ENCODE measurements at regions of chr6 and their contacts with region 1.

Region 1: GRCh38 chr6:143698759-143699429 is 21.1 kb downstream of the PHACTR2 start:
- DNase-seq: peak in 1 of 2 experiments; percentile 68
- H3K4me3 ChIP-seq: no peak overlapping the region
- H3K27ac ChIP-seq: no peak overlapping the region; the same call in 1 of the 2 replicates
- H3K4me1 ChIP-seq: peaks cover 0 to 11% (median 3%) of the 10 kb centered on the region in 4 experiments; a peak in 3 of 7 replicates
- H3K27me3 ChIP-seq: no peaks in the 10 kb centered on the region
- CTCF ChIP-seq: peak; percentile 47 to 75 (median 48)
- EP300 ChIP-seq: no peak
- POLR2A ChIP-seq: no peak
- RAD21 ChIP-seq: peak; percentile 47 to 68

Region 2: GRCh38 chr6:143726015-143726647 is 27.2 kb after region 1 on chr6:
- CTCF ChIA-PET with region 1: interaction called, 13 read pairs
- POLR2A ChIA-PET with region 1: no interaction called
- DNase-seq: no peak
- H3K4me3 ChIP-seq: no peak overlapping the region
- H3K27ac ChIP-seq: no peak overlapping the region
- H3K4me1 ChIP-seq: no peaks in the 10 kb centered on the region
- H3K27me3 ChIP-seq: no peaks in the 10 kb centered on the region
- CTCF ChIP-seq: no peak
- EP300 ChIP-seq: no peak
- POLR2A ChIP-seq: no peak
- RAD21 ChIP-seq: no peak

Region 3: DNA sequence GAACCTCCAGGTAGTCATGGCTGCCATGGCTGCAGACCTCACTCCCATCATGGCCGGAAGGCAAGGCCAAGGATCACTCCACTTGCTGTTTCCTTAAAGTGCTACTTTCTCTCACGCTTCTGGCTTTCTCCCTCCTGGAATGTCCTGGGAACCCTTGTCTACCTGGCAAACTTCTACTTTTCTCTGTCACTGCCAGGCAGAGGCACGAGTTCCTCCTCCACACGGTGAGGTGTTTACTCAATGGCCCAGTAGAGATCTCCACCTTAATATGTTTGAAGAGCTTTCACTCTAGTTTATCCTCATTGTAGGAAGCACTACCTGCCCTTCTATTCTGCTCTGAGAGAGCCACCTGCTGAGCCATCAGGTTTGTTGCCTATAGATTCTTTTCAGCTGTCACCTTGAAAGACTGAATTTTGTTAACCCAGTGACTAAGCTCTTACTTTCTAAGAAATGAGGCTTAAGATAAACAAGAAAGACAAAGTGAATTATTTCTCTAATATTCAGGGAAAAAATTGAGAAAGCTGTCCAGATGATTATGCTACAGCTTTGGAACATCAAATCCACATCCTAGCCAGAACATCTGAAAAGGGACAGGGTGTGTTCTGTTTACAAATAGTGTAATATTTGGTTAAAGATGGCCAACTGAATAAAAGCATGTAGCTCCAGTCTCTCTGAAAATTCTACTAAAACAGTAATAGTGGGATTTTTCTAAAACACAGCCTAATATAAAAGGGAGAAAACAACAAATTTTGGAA is 254.2 kb after region 1 on chr6:
- CTCF ChIA-PET with region 1: no interaction called
- POLR2A ChIA-PET with region 1: no interaction called
- DNase-seq: no peak
- H3K4me3 ChIP-seq: no peak overlapping the region
- H3K27ac ChIP-seq: no peak overlapping the region
- H3K4me1 ChIP-seq: peaks cover 3 to 12% (median 5%) of the 10 kb centered on the region in 4 experiments; a peak in 6 of 7 replicates
- H3K27me3 ChIP-seq: peaks cover 10 to 32% (median 30%) of the 10 kb centered on the region in 4 experiments
- CTCF ChIP-seq: no peak
- EP300 ChIP-seq: no peak
- POLR2A ChIP-seq: no peak
- RAD21 ChIP-seq: no peak

Region 4: GRCh38 chr6:144197919-144198318 is 499.0 kb after region 1 on chr6:
- CTCF ChIA-PET with region 1: no interaction called
- POLR2A ChIA-PET with region 1: no interaction called
- DNase-seq: no peak
- H3K4me3 ChIP-seq: no peak overlapping the region
- H3K27ac ChIP-seq: no peak overlapping the region
- H3K4me1 ChIP-seq: no peaks in the 10 kb centered on the region
- H3K27me3 ChIP-seq: no peaks in the 10 kb centered on the region
- CTCF ChIP-seq: no peak
- EP300 ChIP-seq: no peak
- POLR2A ChIP-seq: no peak
- RAD21 ChIP-seq: no peak